ENCODE measurements at regions of chr4 and their contacts with region 1.

Region 1: GRCh38 chr4:167025670-167026069 is 208.6 kb downstream of the SPOCK3 start:
- DNase-seq: no peak
- H3K4me3 ChIP-seq: no peak overlapping the region
- H3K27ac ChIP-seq: no peak overlapping the region
- H3K4me1 ChIP-seq: no peaks in the 10 kb centered on the region
- H3K27me3 ChIP-seq: no peaks in the 10 kb centered on the region
- CTCF ChIP-seq: no peak
- POLR2A ChIP-seq: no peak

Region 2: GRCh38 chr4:166972071-166972470 is 53.6 kb before region 1 on chr4:
- intact Hi-C with region 1: loop called (anchors 2 kb)
- DNase-seq: no peak
- H3K4me3 ChIP-seq: no peak overlapping the region
- H3K27ac ChIP-seq: no peak overlapping the region
- H3K4me1 ChIP-seq: no peaks in the 10 kb centered on the region
- H3K27me3 ChIP-seq: no peaks in the 10 kb centered on the region
- CTCF ChIP-seq: no peak
- POLR2A ChIP-seq: no peak

Measured in breast epithelium (tissue), 4 donors.